ENCODE measurements at regions of chr2 and their contacts with region 1.

Region 1: GRCh38 chr2:120312861-120313694 is 32.9 kb upstream of the INHBB start:
- DNase-seq: peak; percentile 78
- H3K4me3 Mint-ChIP-seq: peak overlapping the region; percentile 11
- H3K27ac Mint-ChIP-seq: no peak overlapping the region
- H3K4me1 Mint-ChIP-seq: no peaks in the 10 kb centered on the region
- H3K27me3 Mint-ChIP-seq: no peaks in the 10 kb centered on the region
- CTCF ChIP-seq: peak; percentile 87

Region 2: GRCh38 chr2:120109186-120110061 is 203.7 kb before region 1 on chr2:
- CTCF ChIA-PET with region 1: interaction called, 18 read pairs
- POLR2A ChIA-PET with region 1: interaction called, 6 read pairs
- intact Hi-C with region 1: loop called (anchors 1 kb)
- DNase-seq: peak; percentile 65
- H3K4me3 Mint-ChIP-seq: peak overlapping the region; percentile 34
- H3K27ac Mint-ChIP-seq: peak overlapping the region; percentile 28
- H3K4me1 Mint-ChIP-seq: peaks cover 44% of the 10 kb centered on the region
- H3K27me3 Mint-ChIP-seq: no peaks in the 10 kb centered on the region
- CTCF ChIP-seq: peak; percentile 64

Region 3: GRCh38 chr2:120231974-120232635 is 81.0 kb before region 1 on chr2:
- CTCF ChIA-PET with region 1: interaction called, 22 read pairs
- POLR2A ChIA-PET with region 1: interaction called, 5 read pairs
- intact Hi-C with region 1: loop called (anchors 1 kb)
- DNase-seq: no peak
- H3K4me3 Mint-ChIP-seq: peak overlapping the region; percentile 67
- H3K27ac Mint-ChIP-seq: no peak overlapping the region
- H3K4me1 Mint-ChIP-seq: no peaks in the 10 kb centered on the region
- H3K27me3 Mint-ChIP-seq: no peaks in the 10 kb centered on the region
- CTCF ChIP-seq: no peak

Region 4: DNA sequence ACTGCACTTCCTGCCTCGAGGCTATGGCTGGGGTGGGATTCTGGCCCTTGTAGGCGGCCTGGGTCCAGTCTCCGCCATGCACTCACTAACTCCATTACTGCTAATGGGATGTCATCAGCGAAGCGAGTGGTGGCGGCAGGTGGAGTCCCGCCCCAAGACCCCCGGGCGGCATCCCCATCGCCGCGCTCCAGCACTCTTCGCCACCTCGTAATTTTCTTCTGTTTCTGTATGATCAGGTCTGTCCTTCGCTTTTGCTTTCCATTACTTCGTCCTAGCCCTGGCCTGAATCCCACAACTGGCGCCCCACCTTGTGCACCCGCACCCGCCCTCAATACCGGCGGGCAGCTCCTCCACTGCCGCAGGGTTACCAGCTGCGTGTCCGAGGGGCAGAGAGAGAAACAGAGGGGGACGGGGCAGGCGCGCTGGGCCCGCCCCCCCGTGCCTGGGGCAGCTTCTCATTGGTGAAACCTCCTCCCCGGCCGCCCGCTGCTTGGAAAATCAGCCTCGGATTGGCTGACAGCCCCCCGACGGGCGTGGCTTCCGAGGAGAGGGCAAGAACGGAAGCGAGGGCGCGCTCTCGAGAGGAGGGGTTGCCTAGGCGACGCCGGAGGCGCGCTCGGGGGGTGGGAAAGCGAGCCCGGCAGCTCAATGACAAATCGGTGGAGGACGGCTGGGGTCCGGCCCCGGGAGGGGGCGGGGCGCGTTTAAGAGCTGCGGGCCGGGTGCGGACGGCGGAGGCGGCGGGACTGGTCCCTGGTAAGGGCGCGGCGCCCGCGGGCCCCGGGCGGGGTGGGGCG is 60.7 kb before region 1 on chr2 and contains the start of gene RALB:
- CTCF ChIA-PET with region 1: interaction called, 12 read pairs
- POLR2A ChIA-PET with region 1: no interaction called
- intact Hi-C with region 1: loop called (anchors 1 kb)
- DNase-seq: peak; percentile 98
- H3K4me3 Mint-ChIP-seq: peak within 1 kb of the TSS; percentile 96
- H3K27ac Mint-ChIP-seq: peak within 1 kb of the TSS; percentile 88
- H3K4me1 Mint-ChIP-seq: peaks cover 38% of the 10 kb centered on the region
- H3K27me3 Mint-ChIP-seq: peaks cover 29% of the 10 kb centered on the region
- CTCF ChIP-seq: no peak
- total RNA-seq, gene RALB: 37.4 and 46.5 TPM in 2 replicates

Region 5: DNA sequence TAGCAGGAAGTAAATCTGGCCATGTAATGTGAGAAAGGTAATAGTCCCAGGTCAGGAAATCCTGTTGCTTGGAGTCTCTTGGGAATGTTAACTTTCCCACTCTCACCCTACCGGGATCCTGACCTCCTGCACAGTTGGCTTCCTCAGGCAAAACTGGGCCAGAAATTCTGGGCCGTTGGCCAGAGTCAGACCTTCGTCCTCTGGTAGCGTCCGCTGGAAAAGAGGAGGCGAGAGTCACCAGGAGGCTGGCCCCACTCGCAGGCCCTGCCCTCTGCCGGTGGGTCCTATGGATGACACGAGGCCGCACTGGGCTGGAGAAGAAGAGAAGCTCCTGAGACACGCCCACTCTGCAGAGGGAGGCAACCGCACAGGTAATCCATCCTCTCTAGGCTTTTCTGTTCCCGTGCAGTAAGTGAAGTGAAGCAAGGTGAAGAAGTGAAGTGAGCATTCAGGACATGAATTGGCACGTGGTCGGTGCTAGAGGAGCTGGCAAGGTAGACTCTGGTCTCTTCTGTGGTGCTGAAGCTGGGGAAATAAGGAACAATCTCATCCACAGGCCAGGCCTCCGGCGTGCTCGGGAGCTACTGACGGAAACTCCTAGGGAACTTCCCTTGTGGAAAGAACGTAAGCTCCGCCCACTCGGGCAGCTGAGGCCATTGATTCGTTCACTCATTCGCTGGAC is 239.9 kb after region 1 on chr2:
- CTCF ChIA-PET with region 1: interaction called, 24 read pairs
- POLR2A ChIA-PET with region 1: no interaction called
- intact Hi-C with region 1: no loop called
- DNase-seq: peak; percentile 94
- H3K4me3 Mint-ChIP-seq: no peak overlapping the region
- H3K27ac Mint-ChIP-seq: no peak overlapping the region
- H3K4me1 Mint-ChIP-seq: peaks cover 6% of the 10 kb centered on the region
- H3K27me3 Mint-ChIP-seq: no peaks in the 10 kb centered on the region
- CTCF ChIP-seq: peak; percentile 81